ENCODE measurements at regions of chrX and their contacts with region 1.

Region 1: GRCh38 chrX:38879631-38880220 is 78.5 kb downstream of the MID1IP1 start:
- DNase-seq: peak; percentile 23
- ATAC-seq: peak; percentile 91
- H3K4me3 Mint-ChIP-seq: peak overlapping the region; percentile 58
- H3K27ac Mint-ChIP-seq: peak overlapping the region; percentile 84
- H3K4me1 Mint-ChIP-seq: peaks cover 44% of the 10 kb centered on the region
- H3K27me3 Mint-ChIP-seq: no peaks in the 10 kb centered on the region
- CTCF ChIP-seq: no peak

Region 2: GRCh38 chrX:38803586-38804431 is 75.9 kb before region 1 on chrX:
- CTCF ChIA-PET with region 1: interaction called, 3 read pairs
- POLR2A ChIA-PET with region 1: interaction called, 105 read pairs
- intact Hi-C with region 1: loop called (anchors 1 kb)
- DNase-seq: peak; percentile 55
- ATAC-seq: peak; percentile 63
- H3K4me3 Mint-ChIP-seq: peak overlapping the region; percentile 89
- H3K27ac Mint-ChIP-seq: peak overlapping the region; percentile 80
- H3K4me1 Mint-ChIP-seq: peaks cover 39% of the 10 kb centered on the region
- H3K27me3 Mint-ChIP-seq: no peaks in the 10 kb centered on the region
- CTCF ChIP-seq: no peak

Region 3: DNA sequence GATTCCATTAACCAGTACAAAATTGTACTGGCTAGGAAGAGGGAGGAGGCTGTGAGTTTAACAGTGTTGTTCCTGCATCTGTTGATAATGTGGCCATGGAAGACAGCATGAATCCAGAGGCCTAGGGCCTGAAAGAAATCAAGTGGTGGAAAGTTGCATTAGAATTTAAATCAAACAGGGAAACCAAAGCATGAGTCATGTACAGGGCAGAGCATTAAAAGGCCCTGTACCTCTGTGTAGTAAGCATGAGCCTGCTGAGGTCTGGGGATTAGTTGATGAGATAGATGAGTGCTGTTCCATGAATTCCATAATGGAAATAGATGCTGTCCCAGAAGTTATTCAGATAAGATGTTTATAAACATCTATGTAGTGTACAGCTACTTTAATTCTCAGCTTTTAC is 20.1 kb before region 1 on chrX:
- CTCF ChIA-PET with region 1: interaction called, 3 read pairs
- POLR2A ChIA-PET with region 1: interaction called, 3 read pairs
- intact Hi-C with region 1: loop called (anchors 2 kb)
- DNase-seq: no peak
- ATAC-seq: no peak
- H3K4me3 Mint-ChIP-seq: no peak overlapping the region
- H3K27ac Mint-ChIP-seq: no peak overlapping the region
- H3K4me1 Mint-ChIP-seq: peaks cover 2% of the 10 kb centered on the region
- H3K27me3 Mint-ChIP-seq: no peaks in the 10 kb centered on the region
- CTCF ChIP-seq: no peak

Region 4: GRCh38 chrX:38968344-38969216 is 88.9 kb after region 1 on chrX:
- CTCF ChIA-PET with region 1: no interaction called
- POLR2A ChIA-PET with region 1: no interaction called
- intact Hi-C with region 1: loop called (anchors 10 kb)
- DNase-seq: no peak
- ATAC-seq: no peak
- H3K4me3 Mint-ChIP-seq: no peak overlapping the region
- H3K27ac Mint-ChIP-seq: no peak overlapping the region
- H3K4me1 Mint-ChIP-seq: no peaks in the 10 kb centered on the region
- H3K27me3 Mint-ChIP-seq: no peaks in the 10 kb centered on the region
- CTCF ChIP-seq: no peak

Region 5: GRCh38 chrX:39196192-39197102 is 316.7 kb after region 1 on chrX:
- CTCF ChIA-PET with region 1: no interaction called
- POLR2A ChIA-PET with region 1: interaction called, 4 read pairs
- intact Hi-C with region 1: loop called (anchors 5 kb)
- DNase-seq: peak; percentile 16
- ATAC-seq: peak; percentile 95
- H3K4me3 Mint-ChIP-seq: peak overlapping the region; percentile 65
- H3K27ac Mint-ChIP-seq: peak overlapping the region; percentile 56
- H3K4me1 Mint-ChIP-seq: peaks cover 19% of the 10 kb centered on the region
- H3K27me3 Mint-ChIP-seq: peaks cover 7% of the 10 kb centered on the region
- CTCF ChIP-seq: no peak